ENCODE measurements at regions of chr1 and their contacts with region 1.

Region 1: GRCh38 chr1:201254625-201255506 is 28.4 kb upstream of the PKP1 start:
- H3K4me3 ChIP-seq: no peak overlapping the region
- H3K27ac ChIP-seq: no peak overlapping the region
- H3K4me1 ChIP-seq: no peaks in the 10 kb centered on the region
- CTCF ChIP-seq: peak; percentile 91

Region 2: GRCh38 chr1:201170533-201171062 is 84.3 kb before region 1 on chr1:
- CTCF ChIA-PET with region 1: no interaction called
- POLR2A ChIA-PET with region 1: no interaction called
- H3K4me3 ChIP-seq: peak overlapping the region; percentile 54
- H3K27ac ChIP-seq: peak overlapping the region; percentile 82
- H3K4me1 ChIP-seq: no peaks in the 10 kb centered on the region
- CTCF ChIP-seq: no peak

Region 3: DNA sequence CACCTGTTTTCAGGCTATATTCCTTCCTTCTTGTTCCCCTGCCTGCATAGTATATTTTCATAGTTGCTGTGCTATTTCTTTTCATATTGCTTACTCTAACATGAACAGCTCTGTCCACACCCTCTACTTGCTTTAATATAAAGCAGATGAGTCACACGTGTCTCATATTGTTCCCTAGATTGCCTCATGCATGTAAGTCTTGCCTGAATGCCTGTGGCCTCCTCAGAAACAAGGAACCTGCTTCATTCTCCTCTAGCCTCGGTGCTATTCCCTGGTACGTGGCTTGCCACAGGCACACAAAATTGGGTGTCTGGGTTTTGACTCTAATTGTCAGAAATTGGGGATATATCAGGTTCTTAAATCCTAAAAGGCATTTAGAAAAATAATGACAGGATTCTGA is 11.9 kb after region 1 on chr1:
- CTCF ChIA-PET with region 1: interaction called, 11 read pairs
- POLR2A ChIA-PET with region 1: no interaction called
- H3K4me3 ChIP-seq: no peak overlapping the region
- H3K27ac ChIP-seq: no peak overlapping the region
- H3K4me1 ChIP-seq: no peaks in the 10 kb centered on the region
- CTCF ChIP-seq: no peak